CD8-positive, alpha-beta T cell (primary cell): ENCODE measurements at regions of chr3 and their contacts with region 1.

Region 1: GRCh38 chr3:42581709-42582473 is at the start of gene SEC22C:
- DNase-seq: peak; percentile 88 to 97 (median 96)
- ATAC-seq: peak; percentile 88
- H3K4me3 ChIP-seq: peak within 1 kb of the TSS; percentile 70 to 88
- H3K4me3 Mint-ChIP-seq: peak within 1 kb of the TSS; percentile 92
- H3K27ac ChIP-seq: peak within 1 kb of the TSS; percentile 93 to 94
- H3K27ac Mint-ChIP-seq: peak within 1 kb of the TSS; percentile 98
- H3K4me1 ChIP-seq: peaks cover 22% of the 10 kb centered on the region
- H3K4me1 Mint-ChIP-seq: peaks cover 48% of the 10 kb centered on the region
- H3K27me3 ChIP-seq: no peaks in the 10 kb centered on the region
- H3K27me3 Mint-ChIP-seq: no peaks in the 10 kb centered on the region
- CTCF ChIP-seq: peak; percentile 32
- total RNA-seq, gene SEC22C: 71.3 to 75.2 TPM

Region 2: DNA sequence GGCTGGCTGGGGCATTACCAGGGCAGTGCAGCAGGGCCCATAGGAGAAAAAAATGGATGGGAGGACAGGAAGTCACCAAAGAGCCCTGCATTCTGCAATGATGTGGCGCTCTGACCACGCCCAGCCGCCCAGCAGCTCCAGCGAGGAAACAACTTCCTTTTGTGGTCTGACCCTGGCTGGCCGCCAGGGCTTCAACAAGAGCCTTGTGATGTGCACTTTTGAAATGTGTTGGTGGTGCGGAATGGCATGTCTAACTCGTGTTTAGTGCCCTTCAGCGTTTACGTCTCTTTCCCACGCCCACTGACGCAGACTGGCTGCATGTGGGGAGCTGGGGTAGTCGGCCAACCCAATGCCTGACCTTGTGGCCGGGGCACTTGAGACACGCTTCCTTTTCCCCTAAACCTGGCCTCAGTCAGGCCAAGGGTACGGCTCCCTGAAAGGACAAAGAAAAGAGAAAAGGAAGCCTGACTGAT is 1464.5 kb before region 1 on chr3:
- CTCF ChIA-PET with region 1: no interaction called
- POLR2A ChIA-PET with region 1: no interaction called
- intact Hi-C with region 1: loop called in 1 of 2 experiments (anchors 5 kb)
- DNase-seq: peak; percentile 65 to 94 (median 83)
- ATAC-seq: peak; percentile 84
- H3K4me3 ChIP-seq: peak overlapping the region; percentile 18 to 27
- H3K4me3 Mint-ChIP-seq: peak overlapping the region; percentile 54
- H3K27ac ChIP-seq: peak overlapping the region; percentile 45 to 80
- H3K27ac Mint-ChIP-seq: peak overlapping the region; percentile 96
- H3K4me1 ChIP-seq: peaks cover 25% of the 10 kb centered on the region
- H3K4me1 Mint-ChIP-seq: peaks cover 33% of the 10 kb centered on the region
- H3K27me3 ChIP-seq: no peaks in the 10 kb centered on the region
- H3K27me3 Mint-ChIP-seq: no peaks in the 10 kb centered on the region
- CTCF ChIP-seq: no peak

Region 3: DNA sequence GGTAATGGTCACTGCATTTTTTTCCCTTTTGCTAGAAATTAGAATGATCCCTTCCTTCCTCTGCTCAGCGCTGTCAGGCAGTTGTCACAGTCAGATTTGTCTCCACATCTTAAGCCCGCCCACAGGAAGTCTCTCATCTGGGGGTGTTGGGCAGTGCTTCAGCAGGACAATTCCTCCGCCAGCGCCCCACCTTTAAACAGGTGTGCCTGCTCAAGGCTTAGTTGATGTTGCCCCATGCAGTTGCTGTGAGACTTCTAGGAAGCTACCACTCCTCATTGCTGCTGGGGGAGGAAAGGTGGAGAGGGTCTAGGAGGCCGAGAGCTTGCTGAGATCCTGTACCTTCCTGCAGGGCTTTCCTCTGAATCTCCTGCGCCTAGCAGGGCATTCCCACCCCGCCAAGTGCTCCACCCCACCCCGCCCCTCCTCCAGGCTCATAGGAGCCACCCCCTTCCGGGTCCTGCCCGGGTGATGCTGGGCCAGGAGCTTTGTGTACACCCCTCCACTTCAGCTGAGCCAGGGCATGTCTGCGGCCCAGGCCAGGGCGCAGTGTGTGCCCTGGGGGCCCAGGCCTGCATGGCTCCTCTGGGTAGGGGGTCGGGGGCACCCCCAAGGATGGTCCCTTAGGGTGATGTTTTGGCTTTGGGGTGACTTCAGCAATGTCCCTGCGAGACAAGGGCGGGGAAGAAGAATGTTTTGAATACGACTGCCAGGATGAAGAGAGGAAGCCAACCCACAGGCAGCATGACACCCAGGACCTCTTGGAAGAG is 422.0 kb before region 1 on chr3:
- CTCF ChIA-PET with region 1: no interaction called
- POLR2A ChIA-PET with region 1: no interaction called
- intact Hi-C with region 1: no loop called
- DNase-seq: peak in 8 of 9 experiments; percentile 25 to 65 (median 38)
- ATAC-seq: peak; percentile 84
- H3K4me3 ChIP-seq: peak overlapping the region; percentile 14 to 36
- H3K4me3 Mint-ChIP-seq: peak overlapping the region; percentile 68
- H3K27ac ChIP-seq: peak overlapping the region in 1 of 2 experiments; percentile 15
- H3K27ac Mint-ChIP-seq: peak overlapping the region; percentile 71
- H3K4me1 ChIP-seq: peaks cover 15% of the 10 kb centered on the region
- H3K4me1 Mint-ChIP-seq: peaks cover 38% of the 10 kb centered on the region
- H3K27me3 ChIP-seq: no peaks in the 10 kb centered on the region
- H3K27me3 Mint-ChIP-seq: no peaks in the 10 kb centered on the region
- CTCF ChIP-seq: no peak

Region 4: DNA sequence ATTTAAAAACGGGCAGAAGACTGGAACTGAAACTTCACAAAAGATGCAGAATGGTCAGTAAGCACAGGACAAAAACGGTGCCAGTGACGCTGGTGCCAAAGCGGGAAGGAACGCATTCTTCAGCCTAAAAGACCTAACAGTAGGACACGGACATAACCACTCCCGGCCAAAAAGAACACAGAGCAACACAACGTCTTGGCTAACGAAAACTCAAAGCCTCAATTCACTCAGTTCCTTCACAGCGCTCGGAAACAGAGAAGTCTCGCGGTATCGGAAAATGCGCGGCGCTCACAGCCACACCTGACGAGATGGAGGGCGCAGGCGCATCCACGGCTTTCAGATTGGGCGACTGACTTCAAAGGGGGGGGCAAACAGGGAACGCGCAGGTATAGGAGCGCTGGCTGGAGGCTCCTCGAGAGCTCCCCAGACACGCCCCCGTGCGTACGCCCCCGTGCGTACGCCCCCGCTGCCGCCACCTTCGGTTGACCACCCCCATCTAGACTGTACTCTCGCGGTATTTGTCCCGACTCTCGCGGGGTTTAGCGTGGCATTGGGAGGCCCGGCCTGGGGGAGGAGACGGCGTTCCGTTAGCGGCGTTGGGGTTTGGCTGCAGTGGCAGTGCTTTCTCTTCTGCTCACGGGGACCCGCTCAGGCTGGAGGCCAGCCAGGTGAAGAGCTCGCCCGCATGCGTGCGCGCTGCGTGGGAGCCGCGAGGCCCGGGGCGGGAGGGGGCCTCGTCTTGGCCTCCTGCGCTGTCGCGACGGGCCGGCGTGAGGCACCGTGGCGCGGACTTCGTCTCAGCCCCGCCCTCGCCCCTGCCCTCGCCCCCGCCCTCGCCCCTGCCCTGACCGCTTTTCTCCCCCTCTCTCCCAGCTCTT is 18.5 kb after region 1 on chr3 and contains the start of gene NKTR:
- CTCF ChIA-PET with region 1: interaction called, 7 read pairs
- POLR2A ChIA-PET with region 1: interaction called, 21 read pairs
- intact Hi-C with region 1: loop called (anchors 1 kb)
- DNase-seq: peak; percentile 99 to 100 (median 100)
- ATAC-seq: peak; percentile 94
- H3K4me3 ChIP-seq: peak within 1 kb of the TSS; percentile 56 to 96
- H3K4me3 Mint-ChIP-seq: peak within 1 kb of the TSS; percentile 93
- H3K27ac ChIP-seq: peak within 1 kb of the TSS; percentile 69 to 81
- H3K27ac Mint-ChIP-seq: peak within 1 kb of the TSS; percentile 97
- H3K4me1 ChIP-seq: peaks cover 22% of the 10 kb centered on the region
- H3K4me1 Mint-ChIP-seq: peaks cover 39% of the 10 kb centered on the region
- H3K27me3 ChIP-seq: no peaks in the 10 kb centered on the region
- H3K27me3 Mint-ChIP-seq: no peaks in the 10 kb centered on the region
- CTCF ChIP-seq: no peak
- total RNA-seq, gene NKTR: 190 to 204 TPM

Region 5: GRCh38 chr3:42739401-42740158 is 157.7 kb after region 1 on chr3:
- CTCF ChIA-PET with region 1: interaction called, 7 read pairs
- POLR2A ChIA-PET with region 1: no interaction called
- intact Hi-C with region 1: loop called (anchors 1 to 5 kb)
- DNase-seq: no peak
- ATAC-seq: no peak
- H3K4me3 ChIP-seq: no peak overlapping the region
- H3K4me3 Mint-ChIP-seq: no peak overlapping the region
- H3K27ac ChIP-seq: no peak overlapping the region
- H3K27ac Mint-ChIP-seq: no peak overlapping the region
- H3K4me1 ChIP-seq: no peaks in the 10 kb centered on the region
- H3K4me1 Mint-ChIP-seq: peaks cover 4% of the 10 kb centered on the region
- H3K27me3 ChIP-seq: no peaks in the 10 kb centered on the region
- H3K27me3 Mint-ChIP-seq: no peaks in the 10 kb centered on the region
- CTCF ChIP-seq: no peak

Region 6: GRCh38 chr3:42772670-42773408 is 190.9 kb after region 1 on chr3 and contains the start of gene CCDC13:
- CTCF ChIA-PET with region 1: no interaction called
- POLR2A ChIA-PET with region 1: no interaction called
- intact Hi-C with region 1: loop called in 1 of 2 experiments (anchors 10 kb)
- DNase-seq: peak; percentile 76 to 92 (median 90)
- ATAC-seq: peak; percentile 89
- H3K4me3 ChIP-seq: peak within 1 kb of the TSS; percentile 58 to 62
- H3K4me3 Mint-ChIP-seq: peak within 1 kb of the TSS; percentile 91
- H3K27ac ChIP-seq: peak within 1 kb of the TSS in 1 of 2 experiments; percentile 38
- H3K27ac Mint-ChIP-seq: peak within 1 kb of the TSS; percentile 80
- H3K4me1 ChIP-seq: peaks cover 9% of the 10 kb centered on the region
- H3K4me1 Mint-ChIP-seq: peaks cover 12% of the 10 kb centered on the region
- H3K27me3 ChIP-seq: no peaks in the 10 kb centered on the region
- H3K27me3 Mint-ChIP-seq: no peaks in the 10 kb centered on the region
- CTCF ChIP-seq: no peak
- total RNA-seq, gene CCDC13: 0.44 TPM in 1 of 2 experiments, not detected in the other

Region 7: GRCh38 chr3:42880601-42881451 is 298.9 kb after region 1 on chr3:
- CTCF ChIA-PET with region 1: no interaction called
- POLR2A ChIA-PET with region 1: no interaction called
- intact Hi-C with region 1: loop called in 1 of 2 experiments (anchors 1 kb)
- DNase-seq: peak; percentile 65 to 95 (median 86)
- ATAC-seq: peak; percentile 99
- H3K4me3 ChIP-seq: peak overlapping the region; percentile 75 to 77
- H3K4me3 Mint-ChIP-seq: peak overlapping the region; percentile 84
- H3K27ac ChIP-seq: peak overlapping the region; percentile 37 to 59
- H3K27ac Mint-ChIP-seq: peak overlapping the region; percentile 86
- H3K4me1 ChIP-seq: peaks cover 15% of the 10 kb centered on the region
- H3K4me1 Mint-ChIP-seq: peaks cover 11% of the 10 kb centered on the region
- H3K27me3 ChIP-seq: no peaks in the 10 kb centered on the region
- H3K27me3 Mint-ChIP-seq: no peaks in the 10 kb centered on the region
- CTCF ChIP-seq: peak; percentile 86